HEK293T (cell line): ENCODE measurements at regions of chr12 and their contacts with region 1.

Region 1: GRCh38 chr12:53379389-53380103 is 430 bp upstream of the SP1 start:
- DNase-seq: peak; percentile 89

Region 2: DNA sequence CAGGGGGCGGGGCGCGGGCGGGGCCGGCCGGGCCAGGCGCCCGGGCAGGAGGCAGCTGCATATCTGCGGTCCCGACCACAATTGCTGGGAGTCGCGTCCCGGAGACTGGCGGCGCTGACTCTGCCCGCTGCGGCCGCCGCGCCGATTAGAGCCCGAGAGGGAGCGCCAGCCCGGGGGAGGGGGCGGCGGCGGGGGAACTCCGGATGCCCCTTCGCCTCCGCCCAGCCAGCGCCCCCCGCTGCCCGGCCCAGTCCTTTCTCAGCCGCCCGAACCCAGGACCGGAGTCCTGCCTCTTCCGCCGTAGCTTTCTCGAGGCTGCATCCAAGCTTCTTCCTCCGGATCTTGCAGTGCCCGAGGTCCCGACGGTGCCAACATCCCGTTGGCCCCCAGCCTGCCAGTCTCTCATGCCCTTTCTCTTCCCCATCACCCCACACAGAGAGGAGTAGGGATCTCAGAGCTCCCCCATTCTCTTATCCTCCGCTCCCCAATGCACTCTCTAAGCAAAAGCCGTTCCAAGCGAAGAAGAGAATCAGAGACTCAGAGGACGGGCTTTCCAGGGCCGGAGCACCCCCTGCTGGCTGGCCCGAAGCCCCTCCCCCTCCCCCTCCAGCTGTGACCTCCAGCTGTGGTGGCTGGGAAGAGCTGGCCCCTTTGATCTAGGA is 34.6 kb before region 1 on chr12:
- CTCF ChIA-PET with region 1: interaction called, 5 read pairs
- POLR2A ChIA-PET with region 1: interaction called, 22 read pairs
- DNase-seq: peak; percentile 60

Region 3: GRCh38 chr12:53365245-53365904 is 14.2 kb before region 1 on chr12:
- CTCF ChIA-PET with region 1: interaction called, 4 read pairs
- POLR2A ChIA-PET with region 1: interaction called, 27 read pairs
- DNase-seq: no peak

Region 4: GRCh38 chr12:53418221-53418620 is 38.7 kb after region 1 on chr12:
- CTCF ChIA-PET with region 1: interaction called, 14 read pairs
- POLR2A ChIA-PET with region 1: interaction called, 13 read pairs
- DNase-seq: no peak

Region 5: DNA sequence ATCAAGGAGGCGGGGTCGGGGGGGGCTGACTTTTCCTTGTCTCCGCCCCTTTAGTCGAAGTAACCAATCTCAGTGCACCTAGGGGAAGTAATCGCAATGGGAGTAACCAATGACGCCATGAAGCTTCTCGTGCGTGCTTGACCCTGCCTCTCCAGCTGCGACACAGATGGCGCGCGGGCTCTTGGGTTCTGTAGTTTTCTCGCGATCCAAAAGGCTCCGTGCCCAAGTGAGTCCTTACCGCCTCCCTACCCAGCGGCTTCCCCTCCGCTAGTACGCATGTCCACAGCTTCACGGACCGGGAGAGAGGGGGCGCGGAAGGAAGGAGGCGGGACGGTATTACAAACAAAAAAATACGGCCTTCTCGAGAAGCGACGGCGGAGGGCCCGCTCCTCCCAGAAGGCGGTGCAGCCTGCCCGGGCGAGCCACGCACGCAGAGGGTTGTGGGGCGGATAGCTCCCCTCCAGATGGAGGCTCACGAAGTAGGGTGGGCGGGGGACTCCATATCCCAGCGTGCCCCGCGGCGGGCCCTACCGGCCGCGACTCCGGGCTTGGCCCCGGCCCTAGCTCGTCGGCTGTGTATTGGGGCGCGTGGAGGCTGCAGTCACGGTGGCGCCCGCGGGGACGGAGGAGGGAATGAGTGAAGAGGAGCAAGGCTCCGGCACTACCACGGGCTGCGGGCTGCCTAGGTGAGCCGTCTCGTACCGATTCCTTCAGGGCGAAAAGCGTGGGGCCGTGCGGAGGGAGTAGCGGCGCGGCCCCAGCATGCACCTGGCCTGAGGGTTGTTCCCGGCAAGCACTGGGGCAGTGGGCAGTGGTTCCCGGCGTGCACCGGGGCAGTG is 121.4 kb after region 1 on chr12 and contains the start of gene TARBP2:
- CTCF ChIA-PET with region 1: interaction called, 3 read pairs
- POLR2A ChIA-PET with region 1: interaction called, 22 read pairs
- DNase-seq: peak; percentile 92

Region 6: GRCh38 chr12:53887006-53887405 is 507.5 kb after region 1 on chr12:
- CTCF ChIA-PET with region 1: no interaction called
- POLR2A ChIA-PET with region 1: no interaction called
- DNase-seq: no peak